Mucosa of descending colon (tissue), 3 donors: ENCODE measurements at regions of chr18 and their contacts with region 1.

Region 1: DNA sequence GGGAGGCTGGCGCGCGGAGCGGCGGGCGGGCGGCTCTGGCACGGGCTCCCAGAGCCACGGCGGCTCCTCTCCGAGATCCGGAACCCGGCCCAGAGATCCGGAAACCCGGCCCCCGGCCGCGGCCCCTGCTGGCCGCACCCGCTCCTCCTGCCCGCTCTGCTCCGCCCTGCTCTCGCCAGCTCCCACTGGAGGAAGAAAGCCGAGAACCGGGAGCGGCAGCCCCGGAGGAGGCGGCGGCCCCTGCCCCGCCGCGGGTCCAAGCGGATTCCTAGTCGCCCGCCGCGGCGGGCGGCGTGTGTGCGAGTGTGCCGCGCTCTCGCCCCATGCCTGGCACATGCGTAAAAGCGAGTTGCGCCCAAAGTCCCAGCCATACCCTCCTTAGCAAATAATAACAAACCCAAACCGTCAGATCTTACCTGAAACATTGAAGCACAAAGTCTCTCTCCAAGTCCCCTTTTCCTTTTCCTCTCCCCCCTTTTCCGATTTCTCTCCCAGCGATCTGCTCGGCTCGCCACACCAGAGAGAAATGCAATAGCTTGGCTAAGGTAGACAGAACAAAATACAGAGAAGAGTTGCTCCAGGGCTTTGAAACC is 108.7 kb upstream of the KCTD1 start:
- DNase-seq: peak; percentile 74 to 84 (median 80)
- ATAC-seq: peak; percentile 82
- H3K4me3 ChIP-seq: peak overlapping the region; percentile 32
- H3K4me1 ChIP-seq: peaks cover 4% of the 10 kb centered on the region
- CTCF ChIP-seq: no peak

Region 2: DNA sequence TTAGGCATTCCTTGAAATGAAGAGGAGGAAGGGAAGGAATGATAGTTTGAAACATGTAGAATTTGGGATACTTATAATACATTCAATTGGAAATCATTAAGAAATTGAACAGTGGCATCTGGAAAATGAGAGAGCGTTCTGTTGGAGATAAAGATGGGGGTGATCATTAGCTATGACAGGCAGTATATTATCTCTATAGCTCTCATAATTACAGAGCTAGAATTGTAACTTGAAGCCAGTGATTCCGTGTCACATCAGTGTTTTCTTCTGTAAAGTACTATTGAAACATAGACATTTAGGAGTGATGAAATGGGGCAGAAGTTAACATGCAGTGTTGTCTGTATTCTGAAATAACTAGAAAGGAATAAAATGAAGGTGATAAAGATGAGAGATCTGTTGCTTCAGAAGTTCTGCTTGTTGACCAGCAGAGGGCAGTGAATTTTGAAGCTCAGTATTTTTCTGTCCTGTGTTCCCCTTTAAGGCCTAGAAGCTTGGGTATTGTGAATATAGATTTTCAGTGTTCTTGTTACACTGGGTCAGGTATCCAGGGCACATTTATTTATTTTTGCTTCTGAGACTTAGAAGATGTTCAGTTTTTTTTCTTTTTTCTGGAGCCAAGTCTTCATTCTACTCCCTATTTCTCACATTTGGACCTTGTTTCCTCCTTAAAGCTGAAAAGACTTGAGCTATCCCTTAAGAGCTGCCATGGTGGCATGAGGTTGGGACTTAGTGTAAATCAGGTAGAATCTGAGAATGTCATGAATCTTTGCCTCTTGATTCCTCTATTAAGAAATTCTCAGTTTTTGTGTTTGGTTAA is 273.4 kb before region 1 on chr18:
- intact Hi-C with region 1: loop called in 1 of 2 experiments (anchors 10 kb)
- DNase-seq: no peak
- ATAC-seq: peak; percentile 67
- H3K4me3 ChIP-seq: no peak overlapping the region
- H3K4me1 ChIP-seq: no peaks in the 10 kb centered on the region
- CTCF ChIP-seq: peak; percentile 38

Region 3: DNA sequence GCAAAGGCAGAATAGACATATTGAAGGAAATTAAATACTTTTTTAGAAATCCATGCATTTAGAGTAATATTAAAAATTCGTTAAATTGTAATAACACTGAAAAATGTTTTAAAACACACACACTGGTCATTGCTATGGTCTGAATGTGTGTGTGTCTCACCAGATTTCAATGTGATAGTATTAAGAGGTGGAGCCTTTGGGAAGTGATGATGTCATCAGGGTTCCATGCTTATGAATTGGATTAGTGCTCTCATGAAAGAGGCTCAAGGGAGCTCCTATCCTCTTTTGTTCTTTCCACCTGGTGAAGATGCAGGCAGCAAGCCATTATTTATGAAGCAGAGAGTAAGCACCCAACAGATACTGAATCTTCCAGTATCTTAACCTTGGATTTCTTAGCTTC is 1078.1 kb after region 1 on chr18:
- intact Hi-C with region 1: no loop called
- DNase-seq: no peak
- ATAC-seq: no peak
- H3K4me3 ChIP-seq: no peak overlapping the region
- H3K4me1 ChIP-seq: no peaks in the 10 kb centered on the region
- CTCF ChIP-seq: no peak